ENCODE measurements at regions of chr1 and their contacts with region 1.

Region 1: GRCh38 chr1:180863158-180863775 is 49.4 kb upstream of the KIAA1614 start:
- DNase-seq: no peak
- H3K4me3 ChIP-seq: no peak overlapping the region
- H3K27ac ChIP-seq: no peak overlapping the region
- H3K4me1 ChIP-seq: no peaks in the 10 kb centered on the region
- H3K27me3 ChIP-seq: no peaks in the 10 kb centered on the region
- CTCF ChIP-seq: peak in 2 of 3 experiments; percentile 43 to 53; a peak in 2 of 4 replicates
- EP300 ChIP-seq: no peak
- POLR2A ChIP-seq: no peak
- RAD21 ChIP-seq: peak; percentile 80 to 82

Region 2: GRCh38 chr1:180515864-180516388 is 347.3 kb before region 1 on chr1:
- CTCF ChIA-PET with region 1: interaction called, 47 read pairs
- POLR2A ChIA-PET with region 1: interaction called, 5 read pairs
- DNase-seq: peak; percentile 39 to 63
- H3K4me3 ChIP-seq: no peak overlapping the region
- H3K27ac ChIP-seq: no peak overlapping the region
- H3K4me1 ChIP-seq: peaks cover 0 to 3% (median 0%) of the 10 kb centered on the region in 4 experiments; a peak in 2 of 7 replicates
- H3K27me3 ChIP-seq: no peaks in the 10 kb centered on the region
- CTCF ChIP-seq: peak; percentile 70 to 87 (median 84)
- EP300 ChIP-seq: no peak
- POLR2A ChIP-seq: no peak
- RAD21 ChIP-seq: peak; percentile 96 to 98

Region 3: DNA sequence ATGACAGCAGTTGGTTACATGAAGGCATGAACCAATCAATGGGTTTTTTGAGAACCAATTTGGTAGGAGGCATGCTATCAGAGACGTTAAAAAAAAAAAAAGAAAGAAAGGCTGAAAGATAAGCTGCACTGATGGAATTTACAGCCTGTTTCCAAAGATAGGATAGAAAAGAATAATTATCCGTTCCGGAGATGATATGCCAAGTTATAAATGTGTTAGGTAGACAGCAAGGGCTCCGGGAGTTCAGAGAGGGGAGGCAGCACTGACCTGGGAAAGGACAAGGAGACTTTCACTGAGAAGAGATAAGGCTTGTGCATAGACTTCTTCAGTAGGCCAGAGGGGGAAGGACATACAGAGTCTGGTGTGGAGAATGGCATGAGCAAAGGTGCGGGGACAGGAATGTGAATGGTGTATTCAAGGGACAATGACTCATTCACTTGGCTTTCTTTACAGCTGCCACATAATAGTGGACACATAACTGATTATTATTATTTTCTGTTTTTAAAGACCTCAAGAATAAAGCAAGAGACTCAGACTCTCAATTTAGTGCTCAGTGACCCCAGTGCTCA is 336.1 kb before region 1 on chr1:
- CTCF ChIA-PET with region 1: interaction called, 77 read pairs
- POLR2A ChIA-PET with region 1: no interaction called
- DNase-seq: no peak
- H3K4me3 ChIP-seq: no peak overlapping the region
- H3K27ac ChIP-seq: no peak overlapping the region
- H3K4me1 ChIP-seq: peaks cover 0 to 3% (median under 1%) of the 10 kb centered on the region in 4 experiments; a peak in 3 of 7 replicates
- H3K27me3 ChIP-seq: no peaks in the 10 kb centered on the region
- CTCF ChIP-seq: no peak
- EP300 ChIP-seq: no peak
- POLR2A ChIP-seq: no peak
- RAD21 ChIP-seq: no peak

Region 4: GRCh38 chr1:180636138-180636537 is 227.1 kb before region 1 on chr1:
- CTCF ChIA-PET with region 1: interaction called, 31 read pairs
- POLR2A ChIA-PET with region 1: no interaction called
- DNase-seq: no peak
- H3K4me3 ChIP-seq: no peak overlapping the region
- H3K27ac ChIP-seq: no peak overlapping the region
- H3K4me1 ChIP-seq: no peaks in the 10 kb centered on the region
- H3K27me3 ChIP-seq: no peaks in the 10 kb centered on the region
- CTCF ChIP-seq: no peak; a peak in 1 of 4 replicates
- EP300 ChIP-seq: no peak
- POLR2A ChIP-seq: no peak
- RAD21 ChIP-seq: peak; percentile 46 to 47

Region 5: GRCh38 chr1:180724055-180724454 is 139.2 kb before region 1 on chr1:
- CTCF ChIA-PET with region 1: no interaction called
- POLR2A ChIA-PET with region 1: no interaction called
- DNase-seq: no peak
- H3K4me3 ChIP-seq: no peak overlapping the region
- H3K27ac ChIP-seq: no peak overlapping the region
- H3K4me1 ChIP-seq: no peaks in the 10 kb centered on the region
- H3K27me3 ChIP-seq: no peaks in the 10 kb centered on the region
- CTCF ChIP-seq: no peak
- EP300 ChIP-seq: no peak
- POLR2A ChIP-seq: no peak
- RAD21 ChIP-seq: no peak

Region 6: GRCh38 chr1:180734366-180734765 is 128.9 kb before region 1 on chr1:
- CTCF ChIA-PET with region 1: no interaction called
- POLR2A ChIA-PET with region 1: no interaction called
- DNase-seq: no peak
- H3K4me3 ChIP-seq: no peak overlapping the region
- H3K27ac ChIP-seq: no peak overlapping the region
- H3K4me1 ChIP-seq: no peaks in the 10 kb centered on the region
- H3K27me3 ChIP-seq: no peaks in the 10 kb centered on the region
- CTCF ChIP-seq: no peak
- EP300 ChIP-seq: no peak
- POLR2A ChIP-seq: no peak
- RAD21 ChIP-seq: no peak

Region 7: DNA sequence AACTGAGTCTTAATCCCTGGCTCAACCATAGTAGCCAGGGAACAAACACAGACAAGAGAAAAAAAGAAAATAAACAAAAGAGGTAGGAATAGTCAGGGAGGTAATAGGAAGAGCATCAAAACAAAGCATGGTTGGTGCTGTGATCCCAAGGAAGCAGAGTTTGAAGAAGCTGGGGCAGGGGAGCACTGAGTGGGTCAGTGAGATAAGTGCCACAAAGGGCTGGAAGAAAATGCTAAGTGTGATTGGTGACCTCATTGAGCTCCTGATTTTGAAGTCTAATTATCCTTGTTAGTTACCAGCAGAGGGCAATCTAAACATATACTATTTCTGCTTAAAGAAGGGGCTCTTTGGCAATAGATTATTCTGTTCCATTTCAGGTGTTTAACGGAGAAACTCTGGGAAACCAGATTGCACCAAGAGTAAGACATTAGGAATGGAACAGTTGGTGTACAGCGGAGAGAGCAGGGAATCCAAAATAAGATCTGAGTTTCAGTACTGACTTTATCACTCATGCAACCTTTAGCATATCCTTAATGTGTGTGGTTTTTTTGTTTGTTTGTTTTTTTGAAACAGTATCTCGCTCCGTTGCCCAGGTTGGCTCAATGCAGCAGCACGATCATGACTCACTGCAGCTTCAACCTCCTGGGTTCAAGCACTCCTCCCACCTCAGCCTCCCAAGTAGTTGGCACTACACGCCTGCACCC is 18.7 kb after region 1 on chr1:
- CTCF ChIA-PET with region 1: interaction called, 11 read pairs
- POLR2A ChIA-PET with region 1: no interaction called
- DNase-seq: no peak
- H3K4me3 ChIP-seq: no peak overlapping the region
- H3K27ac ChIP-seq: no peak overlapping the region
- H3K4me1 ChIP-seq: no peaks in the 10 kb centered on the region
- H3K27me3 ChIP-seq: no peaks in the 10 kb centered on the region
- CTCF ChIP-seq: peak in 2 of 3 experiments; percentile 48 to 56; a peak in 2 of 4 replicates
- EP300 ChIP-seq: no peak
- POLR2A ChIP-seq: no peak
- RAD21 ChIP-seq: peak; percentile 71 to 79

Measured in H1 (cell line).